Activated T-helper 1 cell treated with anti-CD3 and anti-CD28 coated beads, Interleukin-12 subunit alpha, Interleukin-12 subunit beta, Interleukin-2, Interleukin-4 antibody, amounts not matched to agents 30 ng/mL and 10 ng/mL and 1 ng/mL, durations not matched to agents 14 hours and 24 hours and 36 hours (primary cell): ENCODE measurements at regions of chr22 and their contacts with region 1.

Region 1: GRCh38 chr22:17084554-17085276 is at the start of gene IL17RA:
- DNase-seq: peak; percentile 94
- H3K4me3 Mint-ChIP-seq: peak within 1 kb of the TSS; percentile 93
- H3K27ac Mint-ChIP-seq: peak within 1 kb of the TSS; percentile 92
- H3K4me1 Mint-ChIP-seq: peaks cover 47% of the 10 kb centered on the region
- H3K27me3 Mint-ChIP-seq: peaks cover under 1% of the 10 kb centered on the region
- total RNA-seq, gene IL17RA: 23.2 and 23.6 TPM in 2 replicates

Region 2: DNA sequence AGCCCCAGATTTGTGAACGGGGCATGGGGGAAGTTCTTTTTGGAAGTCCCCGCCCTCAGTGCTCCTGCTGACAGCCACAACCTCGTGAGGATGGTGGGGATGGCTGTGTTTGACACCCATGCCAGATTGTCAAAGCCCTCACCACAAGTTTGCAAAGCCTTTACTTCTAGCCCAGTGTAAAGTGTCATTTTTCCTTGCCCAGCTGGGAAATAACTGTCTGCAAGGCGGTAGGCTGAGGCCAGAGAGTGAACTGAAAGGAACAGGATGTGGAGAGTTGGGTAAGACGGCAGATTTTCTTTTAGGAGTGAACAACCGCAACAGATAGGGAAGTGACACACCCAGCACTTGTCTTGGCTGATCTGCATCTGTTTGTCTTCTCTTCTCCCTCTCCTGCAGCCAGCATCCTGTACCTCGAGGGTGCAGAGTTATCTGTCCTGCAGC is 13.7 kb after region 1 on chr22:
- intact Hi-C with region 1: loop called (anchors 1 kb)
- DNase-seq: peak; percentile 51
- H3K4me3 Mint-ChIP-seq: peak overlapping the region; percentile 71
- H3K27ac Mint-ChIP-seq: peak overlapping the region; percentile 59
- H3K4me1 Mint-ChIP-seq: peaks cover 88% of the 10 kb centered on the region
- H3K27me3 Mint-ChIP-seq: no peaks in the 10 kb centered on the region

Region 3: DNA sequence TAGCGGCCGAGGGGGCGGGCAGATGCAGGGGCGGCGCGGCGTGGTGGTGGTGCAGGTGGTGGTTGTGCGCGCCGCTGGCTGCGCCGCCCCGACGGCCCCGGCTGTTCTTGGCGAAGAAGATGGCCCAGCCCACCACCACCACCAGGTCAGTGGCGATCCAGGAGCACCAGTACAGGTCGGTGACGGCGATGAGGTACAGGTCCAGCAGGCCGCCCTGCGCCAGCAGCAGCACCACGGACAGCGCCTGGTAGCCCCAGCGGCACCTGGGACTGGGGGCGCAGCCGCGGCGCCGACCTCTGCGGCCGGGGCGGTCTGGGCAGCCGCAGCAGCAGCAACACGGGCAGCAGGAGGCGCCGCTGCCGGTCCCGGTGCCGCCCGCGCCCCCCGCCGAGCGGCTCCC is 35.6 kb after region 1 on chr22:
- intact Hi-C with region 1: loop called (anchors 1 kb)
- DNase-seq: peak; percentile 42
- H3K4me3 Mint-ChIP-seq: no peak overlapping the region
- H3K27ac Mint-ChIP-seq: no peak overlapping the region
- H3K4me1 Mint-ChIP-seq: peaks cover 39% of the 10 kb centered on the region
- H3K27me3 Mint-ChIP-seq: peaks cover 25% of the 10 kb centered on the region

Region 4: DNA sequence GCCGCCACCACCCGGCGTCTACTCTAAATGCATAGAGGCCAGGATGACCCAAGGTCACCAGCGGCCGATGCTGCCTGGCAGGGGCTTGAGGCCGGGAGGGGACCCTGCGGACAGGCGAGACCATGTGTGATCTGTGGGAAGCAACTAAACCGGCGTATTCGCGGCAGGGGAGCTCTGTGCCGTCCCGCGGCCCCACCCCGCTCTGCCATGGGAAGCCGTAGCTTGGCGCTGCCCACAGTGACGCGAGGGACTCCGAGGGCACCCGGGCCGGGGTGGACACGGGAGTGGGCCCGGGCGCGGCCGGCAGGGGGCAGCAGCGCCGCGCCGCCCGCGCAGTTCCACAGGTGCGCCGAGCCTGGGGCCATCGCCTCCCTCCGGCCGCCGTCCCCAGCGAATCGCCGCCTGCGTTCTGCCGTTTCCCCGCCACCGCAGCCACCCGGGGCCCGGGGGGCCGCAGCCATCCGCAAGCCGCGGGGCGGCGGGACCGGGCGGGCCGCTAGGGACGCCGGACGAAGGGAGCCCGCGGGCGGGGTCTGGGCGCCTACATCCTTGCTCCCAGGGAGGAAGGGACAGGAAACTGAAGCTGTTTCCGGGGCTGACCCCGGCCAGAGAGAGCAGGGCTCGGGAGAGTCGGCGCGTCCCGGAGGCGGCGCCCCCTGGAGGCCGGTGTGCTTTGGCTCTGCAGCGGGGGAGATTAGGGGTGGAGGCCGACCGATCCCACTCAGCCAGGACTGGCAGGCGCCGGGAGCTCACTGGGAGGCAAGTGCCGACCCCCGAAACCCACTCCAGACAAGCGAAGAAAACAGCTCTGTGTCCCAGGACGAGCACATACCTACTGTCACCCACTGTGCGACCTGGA is 86.8 kb after region 1 on chr22:
- intact Hi-C with region 1: loop called (anchors 1 kb)
- DNase-seq: peak; percentile 73
- H3K4me3 Mint-ChIP-seq: peak overlapping the region; percentile 88
- H3K27ac Mint-ChIP-seq: peak overlapping the region; percentile 78
- H3K4me1 Mint-ChIP-seq: peaks cover 5% of the 10 kb centered on the region
- H3K27me3 Mint-ChIP-seq: peaks cover 9% of the 10 kb centered on the region

Region 5: GRCh38 chr22:17303840-17304779 is 219.4 kb after region 1 on chr22:
- intact Hi-C with region 1: loop called (anchors 5 kb)
- DNase-seq: peak; percentile 77
- H3K4me3 Mint-ChIP-seq: peak overlapping the region; percentile 60
- H3K27ac Mint-ChIP-seq: peak overlapping the region; percentile 88
- H3K4me1 Mint-ChIP-seq: peaks cover 51% of the 10 kb centered on the region
- H3K27me3 Mint-ChIP-seq: peaks cover 4% of the 10 kb centered on the region

Region 6: GRCh38 chr22:17773606-17774205 is 689.0 kb after region 1 on chr22:
- intact Hi-C with region 1: loop called (anchors 5 kb)
- DNase-seq: peak; percentile 67
- H3K4me3 Mint-ChIP-seq: peak overlapping the region; percentile 79
- H3K27ac Mint-ChIP-seq: peak overlapping the region; percentile 65
- H3K4me1 Mint-ChIP-seq: peaks cover 63% of the 10 kb centered on the region
- H3K27me3 Mint-ChIP-seq: peaks cover 14% of the 10 kb centered on the region